Left colon (tissue), 2 donors: ENCODE measurements at regions of chr17 and their contacts with region 1.

Region 1: DNA sequence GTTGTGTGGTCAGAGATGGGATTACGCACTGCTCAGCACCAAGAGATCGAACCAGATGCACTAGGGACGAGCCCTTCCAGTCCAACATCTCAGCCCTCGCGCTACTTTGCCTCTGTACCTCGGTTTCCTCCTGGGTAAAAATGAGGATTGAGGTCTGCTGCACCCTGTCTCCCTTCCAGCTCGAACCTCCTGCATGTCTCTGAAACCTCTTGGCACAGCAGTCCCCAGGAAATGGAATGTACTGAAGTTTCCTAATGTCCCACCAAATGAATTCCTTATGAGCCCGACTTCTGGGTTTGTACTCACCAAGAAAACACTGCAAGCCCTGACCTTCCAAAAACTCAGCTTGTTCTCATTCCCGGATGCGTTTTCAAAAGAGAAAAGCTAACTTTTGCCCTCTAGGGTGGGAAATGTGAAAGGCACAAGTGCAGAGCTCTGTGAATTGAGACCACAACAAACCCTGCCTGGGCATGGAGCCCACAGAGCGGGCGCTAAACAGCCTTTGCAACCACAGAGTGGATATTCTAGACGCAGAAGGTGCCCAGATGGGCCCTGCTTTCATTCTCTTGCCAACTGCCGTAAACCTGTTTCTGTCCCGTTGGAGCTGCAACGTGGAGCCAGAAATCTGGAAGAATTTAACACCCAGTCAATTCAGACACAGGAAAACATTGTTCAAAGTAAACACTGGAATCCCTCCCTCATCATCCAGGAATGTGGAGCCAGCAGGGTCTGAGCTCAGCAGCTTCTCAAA is 10.3 kb downstream of the CDRT4 start:
- DNase-seq: peak in 1 of 2 donors; percentile 66
- ATAC-seq: peak; percentile 7

Region 2: GRCh38 chr17:15260376-15261257 is 196.5 kb before region 1 on chr17:
- intact Hi-C with region 1: loop called in 1 of 2 experiments (anchors 10 kb)
- DNase-seq: peak; percentile 77 to 86
- ATAC-seq: peak; percentile 66

Region 3: GRCh38 chr17:15341385-15341849 is 115.7 kb before region 1 on chr17 and contains the start of gene TEKT3:
- intact Hi-C with region 1: loop called in 1 of 2 experiments (anchors 10 kb)
- DNase-seq: peak; percentile 88 to 90
- ATAC-seq: peak; percentile 100
- total RNA-seq, gene TEKT3: 0.36 to 0.64 TPM